Activated B cell treated with CpG ODN at 0.5 μM for 24 hours (primary cell): ENCODE measurements at regions of chr11 and their contacts with region 1.

Region 1: DNA sequence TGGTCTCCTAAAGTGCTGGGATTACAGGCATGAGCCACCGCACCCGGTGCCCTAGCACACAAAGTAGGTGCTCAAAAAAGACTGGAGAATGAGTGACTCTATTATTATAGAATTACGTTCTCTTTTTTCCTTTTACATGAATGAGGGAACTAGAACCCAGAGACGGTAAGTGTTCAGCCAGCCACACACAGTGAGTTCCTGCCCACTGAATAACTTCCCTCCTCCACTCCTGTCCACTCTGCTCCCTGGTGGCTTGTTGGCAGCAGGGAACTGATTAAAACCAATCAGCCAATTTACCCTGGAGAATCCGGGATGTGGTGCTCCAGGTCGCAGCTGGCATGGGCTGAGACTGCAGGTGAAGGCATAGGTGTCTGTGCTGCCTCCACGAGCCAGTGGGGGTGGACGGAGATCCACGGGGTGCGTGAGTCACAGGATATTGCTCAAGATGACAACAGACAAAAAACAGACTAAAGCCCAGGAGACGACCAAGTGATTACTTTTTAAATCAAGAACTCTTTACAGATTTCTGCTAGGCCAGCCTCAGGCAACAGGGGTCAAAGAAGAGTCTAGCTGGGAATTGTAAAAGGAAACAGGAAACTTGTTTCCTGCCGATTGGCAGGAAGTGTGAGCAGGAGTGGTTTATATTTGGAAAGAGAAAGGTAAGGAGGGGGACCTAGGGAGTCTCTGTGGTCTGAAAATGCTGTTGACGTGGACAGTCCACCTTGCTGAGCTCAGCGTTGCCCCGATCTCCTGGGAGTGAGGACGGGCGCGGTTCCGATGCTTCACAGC is 95.2 kb upstream of the TP53I11 start:
- DNase-seq: no peak
- ATAC-seq: no peak
- H3K4me3 Mint-ChIP-seq: no peak overlapping the region
- H3K27ac Mint-ChIP-seq: no peak overlapping the region
- H3K4me1 Mint-ChIP-seq: no peaks in the 10 kb centered on the region
- H3K27me3 Mint-ChIP-seq: peaks cover 5% of the 10 kb centered on the region
- CTCF ChIP-seq: no peak

Region 2: DNA sequence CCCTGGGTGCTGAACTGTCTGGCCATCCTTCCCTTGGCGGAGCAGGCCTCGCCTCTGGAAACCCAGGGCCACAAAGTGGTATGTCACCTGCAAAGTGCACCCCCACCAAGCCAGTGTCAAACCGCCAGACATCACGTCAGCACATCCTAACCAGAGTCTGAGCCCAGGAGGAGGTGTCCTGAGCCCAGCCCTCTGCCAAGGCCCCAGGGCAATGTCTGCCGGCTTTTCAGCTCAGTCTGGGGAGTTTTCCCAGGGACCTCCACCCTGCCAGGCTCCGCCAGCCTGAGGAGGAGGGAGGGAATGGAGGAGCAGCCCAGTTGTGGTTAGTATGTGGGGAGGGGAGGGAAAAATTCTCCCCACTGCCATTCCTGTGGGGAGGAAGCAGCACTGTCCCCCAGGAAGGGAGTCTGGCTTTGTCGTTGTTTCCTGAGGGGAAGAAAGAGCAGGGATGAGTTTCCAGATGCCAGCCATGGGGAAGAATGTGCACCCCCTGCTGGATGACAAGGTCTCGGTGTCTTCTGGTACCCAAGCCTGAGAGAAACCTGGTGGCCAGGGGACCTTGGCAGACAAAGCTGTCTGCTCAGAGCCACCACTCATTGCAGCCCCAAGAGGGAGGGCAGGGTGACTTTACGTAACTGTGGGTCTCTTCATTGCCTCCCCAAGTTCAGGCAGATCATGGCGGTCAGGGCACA is 561.8 kb before region 1 on chr11:
- CTCF ChIA-PET with region 1: no interaction called
- POLR2A ChIA-PET with region 1: interaction called, 16 read pairs
- intact Hi-C with region 1: no loop called
- DNase-seq: no peak
- ATAC-seq: no peak
- H3K4me3 Mint-ChIP-seq: no peak overlapping the region
- H3K27ac Mint-ChIP-seq: no peak overlapping the region
- H3K4me1 Mint-ChIP-seq: no peaks in the 10 kb centered on the region
- H3K27me3 Mint-ChIP-seq: peaks cover 15% of the 10 kb centered on the region
- CTCF ChIP-seq: no peak

Region 3: GRCh38 chr11:44565211-44565952 is 480.5 kb before region 1 on chr11 and contains the start of gene CD82:
- CTCF ChIA-PET with region 1: no interaction called
- POLR2A ChIA-PET with region 1: no interaction called
- intact Hi-C with region 1: no loop called
- DNase-seq: peak; percentile 98
- ATAC-seq: peak; percentile 83
- H3K4me3 Mint-ChIP-seq: peak within 1 kb of the TSS; percentile 92
- H3K27ac Mint-ChIP-seq: peak within 1 kb of the TSS; percentile 80
- H3K4me1 Mint-ChIP-seq: peaks cover 72% of the 10 kb centered on the region
- H3K27me3 Mint-ChIP-seq: no peaks in the 10 kb centered on the region
- CTCF ChIP-seq: no peak
- total RNA-seq, gene CD82: 728 and 770 TPM in 2 replicates

Region 4: GRCh38 chr11:45390407-45390806 is 344.5 kb after region 1 on chr11:
- CTCF ChIA-PET with region 1: no interaction called
- POLR2A ChIA-PET with region 1: no interaction called
- intact Hi-C with region 1: no loop called
- DNase-seq: no peak
- ATAC-seq: no peak
- H3K4me3 Mint-ChIP-seq: no peak overlapping the region
- H3K27ac Mint-ChIP-seq: no peak overlapping the region
- H3K4me1 Mint-ChIP-seq: no peaks in the 10 kb centered on the region
- H3K27me3 Mint-ChIP-seq: peaks cover 17% of the 10 kb centered on the region
- CTCF ChIP-seq: no peak